Right ventricle myocardium inferior (tissue), 1 donor: ENCODE measurements at regions of chr20 and their contacts with region 1.

Region 1: DNA sequence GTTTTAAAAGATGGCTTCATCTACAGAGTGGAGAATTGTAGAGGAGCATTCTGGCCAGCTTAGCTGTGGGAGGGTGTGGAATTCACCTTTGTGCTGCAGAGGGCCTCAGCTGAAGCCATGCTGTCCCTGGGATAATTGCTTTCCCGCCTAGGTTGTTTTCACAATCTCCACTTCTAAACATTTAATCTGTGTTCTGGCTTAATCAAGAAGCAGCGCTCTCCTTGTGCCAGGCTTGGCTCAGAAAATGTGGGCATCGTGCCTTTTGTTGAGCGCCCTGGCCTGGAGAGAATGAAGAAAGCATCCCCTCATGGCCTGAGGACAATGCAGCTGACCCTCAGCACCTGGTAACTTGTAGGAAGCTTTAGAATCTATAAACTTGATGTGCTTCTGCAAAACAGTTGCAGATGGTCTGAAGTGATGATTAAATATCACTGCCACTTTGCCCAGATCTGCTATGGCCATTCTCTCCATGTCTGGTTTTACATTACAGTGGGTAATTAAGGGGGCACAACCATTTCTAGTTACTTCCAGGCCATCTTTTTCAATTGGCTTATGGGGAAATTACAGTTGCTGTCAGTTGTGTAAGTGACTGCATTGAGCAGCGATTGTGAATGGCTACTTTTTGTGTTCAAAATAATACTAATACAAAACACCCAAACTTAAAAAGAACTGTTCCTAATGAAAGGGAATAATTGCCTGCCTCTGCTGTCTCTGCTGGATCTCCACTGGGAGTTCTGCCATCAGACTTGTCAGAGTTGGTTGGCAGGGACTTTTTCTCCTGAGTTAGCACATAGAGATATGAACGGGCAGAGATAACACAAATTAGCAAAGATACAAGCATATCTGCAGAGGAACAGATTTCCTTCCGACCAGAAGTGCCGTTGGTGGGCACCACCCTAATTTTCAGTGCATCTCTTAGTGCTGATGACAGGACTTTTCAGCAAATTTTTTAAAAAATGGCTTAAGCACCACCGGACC is 18.4 kb downstream of the CTNNBL1 start:
- DNase-seq: peak; percentile 69
- ATAC-seq: peak; percentile 87

Region 2: GRCh38 chr20:37726971-37727956 is 15.0 kb after region 1 on chr20:
- intact Hi-C with region 1: loop called (anchors 2 kb)
- DNase-seq: no peak
- ATAC-seq: peak; percentile 92

Region 3: DNA sequence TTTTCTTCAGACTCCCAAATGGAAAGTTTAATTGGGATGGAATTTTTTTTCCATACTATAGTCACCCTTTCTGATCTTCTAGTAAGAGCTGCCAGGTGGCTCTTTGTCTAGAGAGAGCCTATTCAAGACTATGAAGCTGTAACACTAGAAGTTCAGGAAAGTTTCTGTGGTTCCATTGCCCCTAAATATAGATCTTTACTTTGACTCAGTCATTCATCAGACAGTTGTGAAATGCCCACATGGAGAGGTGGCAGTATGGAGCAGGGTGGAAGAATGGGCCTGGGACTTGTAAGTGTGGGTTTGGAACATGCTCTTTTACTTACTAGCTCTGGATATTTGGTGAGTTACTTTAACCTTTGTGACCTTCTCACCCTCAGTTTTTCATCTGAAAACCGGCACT is 69.4 kb after region 1 on chr20:
- intact Hi-C with region 1: no loop called
- DNase-seq: no peak
- ATAC-seq: no peak